ENCODE measurements at regions of chr3 and their contacts with region 1.

Region 1: GRCh38 chr3:50350527-50351322 is at the starts of genes CYB561D2 and NPRL2:
- DNase-seq: peak; percentile 98 to 100 (median 99)
- ATAC-seq: peak; percentile 85
- H3K4me3 ChIP-seq: peak within 1 kb of the TSS; percentile 76
- H3K4me3 Mint-ChIP-seq: peak within 1 kb of the TSS; percentile 97
- H3K27ac ChIP-seq: peak within 1 kb of the TSS; percentile 94 to 97
- H3K27ac Mint-ChIP-seq: peak within 1 kb of the TSS; percentile 99
- H3K4me1 ChIP-seq: peaks cover 73% of the 10 kb centered on the region
- H3K4me1 Mint-ChIP-seq: peaks cover 64% of the 10 kb centered on the region
- H3K27me3 ChIP-seq: no peaks in the 10 kb centered on the region
- H3K27me3 Mint-ChIP-seq: no peaks in the 10 kb centered on the region
- CTCF ChIP-seq: no peak
- total RNA-seq, gene CYB561D2: 19.8 TPM
- total RNA-seq, gene NPRL2: 29.4 to 33.2 TPM

Region 2: GRCh38 chr3:50292159-50293078 is 58.3 kb before region 1 on chr3 and contains the start of gene IFRD2:
- CTCF ChIA-PET with region 1: interaction called, 3 read pairs
- POLR2A ChIA-PET with region 1: interaction called, 42 read pairs
- intact Hi-C with region 1: loop called in 1 of 2 experiments (anchors 2 kb)
- DNase-seq: peak; percentile 90 to 98 (median 95)
- ATAC-seq: peak; percentile 98
- H3K4me3 ChIP-seq: peak within 1 kb of the TSS; percentile 95
- H3K4me3 Mint-ChIP-seq: peak within 1 kb of the TSS; percentile 95
- H3K27ac ChIP-seq: peak within 1 kb of the TSS; percentile 48 to 60
- H3K27ac Mint-ChIP-seq: peak within 1 kb of the TSS; percentile 93
- H3K4me1 ChIP-seq: peaks cover 25% of the 10 kb centered on the region
- H3K4me1 Mint-ChIP-seq: peaks cover 20% of the 10 kb centered on the region
- H3K27me3 ChIP-seq: no peaks in the 10 kb centered on the region
- H3K27me3 Mint-ChIP-seq: no peaks in the 10 kb centered on the region
- CTCF ChIP-seq: no peak
- total RNA-seq, gene IFRD2: 30.0 to 30.4 TPM

Region 3: DNA sequence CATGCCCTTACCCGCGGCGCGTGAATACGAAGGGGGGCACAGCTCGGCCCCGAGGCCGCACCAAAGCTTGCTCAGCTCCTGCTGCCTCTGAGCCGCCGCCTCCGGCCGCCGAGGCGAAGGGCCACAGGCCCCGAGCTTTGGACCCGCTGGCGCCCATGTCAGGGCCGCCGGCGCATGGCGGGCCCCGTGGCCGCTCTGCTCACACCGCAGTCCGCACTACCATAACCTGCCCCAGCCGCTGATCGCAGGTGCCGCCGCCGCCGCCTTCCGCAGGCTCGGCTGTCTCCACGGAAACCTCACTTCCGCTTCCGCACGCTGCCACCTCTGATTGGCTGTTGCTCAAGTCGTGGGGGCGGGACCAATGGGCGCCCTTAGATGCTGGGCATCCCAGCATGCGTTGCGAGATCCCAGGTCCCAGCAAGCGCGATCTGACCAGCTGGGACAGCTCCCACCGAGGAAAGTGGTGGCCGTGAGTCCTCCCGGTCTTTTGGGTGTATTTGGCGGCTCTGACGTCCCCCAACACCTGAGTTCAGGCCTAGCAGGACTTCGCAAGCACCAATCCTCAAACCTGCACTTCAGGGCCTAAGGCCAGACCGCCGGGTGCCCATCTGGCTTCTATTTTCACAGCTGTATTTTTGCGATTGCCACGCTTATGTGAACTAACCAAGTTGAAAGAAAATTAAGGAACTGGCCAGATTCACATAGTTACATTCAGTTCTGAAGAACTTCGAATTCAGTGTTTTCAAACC is 22.6 kb before region 1 on chr3 and contains the start of gene TUSC2:
- CTCF ChIA-PET with region 1: interaction called, 8 read pairs
- POLR2A ChIA-PET with region 1: interaction called, 19 read pairs
- intact Hi-C with region 1: no loop called
- DNase-seq: peak; percentile 91 to 98 (median 94)
- ATAC-seq: peak; percentile 95
- H3K4me3 ChIP-seq: peak within 1 kb of the TSS; percentile 90
- H3K4me3 Mint-ChIP-seq: peak within 1 kb of the TSS; percentile 97
- H3K27ac ChIP-seq: peak within 1 kb of the TSS; percentile 47 to 81
- H3K27ac Mint-ChIP-seq: peak within 1 kb of the TSS; percentile 92
- H3K4me1 ChIP-seq: peaks cover 41% of the 10 kb centered on the region
- H3K4me1 Mint-ChIP-seq: peaks cover 30% of the 10 kb centered on the region
- H3K27me3 ChIP-seq: no peaks in the 10 kb centered on the region
- H3K27me3 Mint-ChIP-seq: no peaks in the 10 kb centered on the region
- CTCF ChIP-seq: no peak
- total RNA-seq, gene TUSC2: 23.1 to 24.7 TPM

Region 4: GRCh38 chr3:50365080-50365841 is 14.5 kb after region 1 on chr3:
- CTCF ChIA-PET with region 1: interaction called, 5 read pairs
- POLR2A ChIA-PET with region 1: interaction called, 25 read pairs
- intact Hi-C with region 1: loop called in 1 of 2 experiments (anchors 2 kb)
- DNase-seq: peak; percentile 92 to 97 (median 95)
- ATAC-seq: peak; percentile 95
- H3K4me3 ChIP-seq: peak overlapping the region; percentile 73
- H3K4me3 Mint-ChIP-seq: peak overlapping the region; percentile 94
- H3K27ac ChIP-seq: peak overlapping the region; percentile 69 to 81
- H3K27ac Mint-ChIP-seq: peak overlapping the region; percentile 98
- H3K4me1 ChIP-seq: peaks cover 30% of the 10 kb centered on the region
- H3K4me1 Mint-ChIP-seq: peaks cover 25% of the 10 kb centered on the region
- H3K27me3 ChIP-seq: no peaks in the 10 kb centered on the region
- H3K27me3 Mint-ChIP-seq: no peaks in the 10 kb centered on the region
- CTCF ChIP-seq: no peak

Region 5: GRCh38 chr3:50950591-50950990 is 599.9 kb after region 1 on chr3:
- CTCF ChIA-PET with region 1: no interaction called
- POLR2A ChIA-PET with region 1: no interaction called
- intact Hi-C with region 1: no loop called
- DNase-seq: peak in 1 of 14 experiments; percentile 8
- ATAC-seq: no peak
- H3K4me3 ChIP-seq: peak overlapping the region; percentile 11
- H3K4me3 Mint-ChIP-seq: no peak overlapping the region
- H3K27ac ChIP-seq: no peak overlapping the region
- H3K27ac Mint-ChIP-seq: no peak overlapping the region
- H3K4me1 ChIP-seq: peaks cover 3% of the 10 kb centered on the region
- H3K4me1 Mint-ChIP-seq: peaks cover 14% of the 10 kb centered on the region
- H3K27me3 ChIP-seq: no peaks in the 10 kb centered on the region
- H3K27me3 Mint-ChIP-seq: peaks cover 4% of the 10 kb centered on the region
- CTCF ChIP-seq: no peak

Region 6: GRCh38 chr3:51391075-51391567 is 1040.4 kb after region 1 on chr3 and contains the start of gene RBM15B:
- CTCF ChIA-PET with region 1: interaction called, 3 read pairs
- POLR2A ChIA-PET with region 1: no interaction called
- intact Hi-C with region 1: loop called in 1 of 2 experiments (anchors 5 kb)
- DNase-seq: peak; percentile 94 to 98 (median 97)
- ATAC-seq: peak; percentile 86
- H3K4me3 ChIP-seq: peak within 1 kb of the TSS; percentile 63
- H3K4me3 Mint-ChIP-seq: peak within 1 kb of the TSS; percentile 86
- H3K27ac ChIP-seq: peak within 1 kb of the TSS; percentile 70 to 88
- H3K27ac Mint-ChIP-seq: peak within 1 kb of the TSS; percentile 91
- H3K4me1 ChIP-seq: peaks cover 90% of the 10 kb centered on the region
- H3K4me1 Mint-ChIP-seq: peaks cover 69% of the 10 kb centered on the region
- H3K27me3 ChIP-seq: no peaks in the 10 kb centered on the region
- H3K27me3 Mint-ChIP-seq: no peaks in the 10 kb centered on the region
- CTCF ChIP-seq: peak; percentile 10
- total RNA-seq, gene RBM15B: 29.1 to 29.2 TPM

Measured in CD4-positive, alpha-beta T cell (primary cell).